ENCODE measurements at regions of chr4 and their contacts with region 1.

Region 1: GRCh38 chr4:10730590-10730989 is 46.0 kb upstream of the CLNK start:
- DNase-seq: no peak
- H3K4me3 Mint-ChIP-seq: peak overlapping the region; percentile 42
- H3K27ac Mint-ChIP-seq: peak overlapping the region; percentile 90
- H3K4me1 Mint-ChIP-seq: peaks cover 86% of the 10 kb centered on the region
- H3K27me3 Mint-ChIP-seq: no peaks in the 10 kb centered on the region

Region 2: DNA sequence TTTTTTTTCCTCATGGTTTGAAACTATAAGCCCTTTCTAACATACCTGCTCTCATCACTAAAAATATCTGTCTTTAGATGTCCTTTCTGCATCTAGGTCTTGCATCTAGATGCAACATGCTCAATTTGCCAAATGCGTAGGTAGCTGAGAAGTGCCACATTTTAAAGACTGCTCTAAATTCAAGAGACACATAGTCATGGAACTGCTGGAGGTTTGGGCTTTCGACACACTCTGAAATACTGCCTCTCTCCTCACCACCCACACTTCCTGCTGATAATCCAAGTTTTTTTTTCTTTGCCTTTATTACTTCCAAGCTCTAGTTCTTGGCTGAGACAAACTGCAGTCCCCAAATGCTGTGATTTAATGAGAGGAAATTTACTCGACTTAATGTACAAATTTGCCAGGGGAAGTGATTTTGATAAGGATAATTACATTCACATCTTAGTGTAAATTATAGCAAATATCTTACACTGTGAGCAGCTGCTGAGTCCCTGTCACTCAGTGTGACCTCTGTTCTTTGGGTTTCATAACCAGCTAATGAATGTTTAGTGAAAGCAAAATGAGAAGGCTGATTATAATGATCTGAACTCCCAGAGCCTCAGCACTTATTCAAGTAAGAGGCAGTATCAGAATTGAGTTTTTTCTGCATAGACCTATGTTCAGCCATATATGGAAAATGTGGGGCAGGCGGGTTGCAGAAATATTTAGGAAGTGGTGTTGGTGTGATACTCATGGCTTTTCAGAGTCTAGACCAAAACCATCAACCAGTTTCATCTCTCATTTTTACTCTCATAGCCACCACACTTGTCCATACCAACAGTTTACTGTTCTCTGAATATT is 917.9 kb before region 1 on chr4:
- intact Hi-C with region 1: loop called (anchors 10 kb)
- DNase-seq: peak; percentile 8
- H3K4me3 Mint-ChIP-seq: no peak overlapping the region
- H3K27ac Mint-ChIP-seq: no peak overlapping the region
- H3K4me1 Mint-ChIP-seq: peaks cover 13% of the 10 kb centered on the region
- H3K27me3 Mint-ChIP-seq: peaks cover 28% of the 10 kb centered on the region

Region 3: DNA sequence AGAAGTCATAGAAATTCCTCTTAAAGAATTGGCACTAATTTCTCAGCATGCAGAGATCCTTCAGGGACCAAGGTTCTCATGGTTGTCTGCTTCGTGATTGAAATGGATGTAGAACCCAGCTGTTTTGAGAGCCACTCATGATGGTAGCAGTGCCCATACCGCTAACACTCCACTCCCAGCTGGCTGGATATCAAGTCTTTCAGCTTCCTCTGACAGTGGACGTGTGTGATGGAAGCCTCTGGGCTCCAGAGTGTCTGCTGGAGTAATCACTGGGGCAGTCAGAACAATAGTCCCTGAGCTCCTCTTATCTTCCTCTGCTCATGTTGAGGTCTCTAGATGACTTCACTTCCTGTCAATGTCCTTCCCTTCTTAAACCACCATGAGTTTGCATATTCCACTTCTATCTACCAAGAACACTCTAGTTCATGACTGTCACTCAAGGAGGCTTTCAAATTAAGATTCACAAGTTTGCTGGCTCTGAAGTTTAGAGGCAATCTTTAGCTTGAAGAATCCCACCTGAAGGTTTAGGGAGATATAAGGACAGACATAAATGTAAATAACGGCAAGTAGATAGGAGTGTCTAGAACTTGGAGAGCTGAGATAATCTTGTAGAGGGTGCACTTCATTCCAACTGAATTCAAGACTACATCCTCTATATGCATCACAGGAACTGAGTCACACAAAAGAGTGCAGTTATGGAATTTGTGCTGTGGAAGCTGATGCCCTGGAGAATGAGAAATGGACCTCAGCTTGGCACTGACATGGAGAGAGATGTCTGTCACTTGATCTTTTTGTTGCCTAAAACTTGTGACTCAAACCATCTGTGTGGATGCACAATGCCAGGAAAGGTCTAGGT is 549.4 kb before region 1 on chr4:
- intact Hi-C with region 1: loop called (anchors 5 kb)
- DNase-seq: peak; percentile 21
- H3K4me3 Mint-ChIP-seq: peak overlapping the region; percentile 63
- H3K27ac Mint-ChIP-seq: peak overlapping the region; percentile 88
- H3K4me1 Mint-ChIP-seq: peaks cover 43% of the 10 kb centered on the region
- H3K27me3 Mint-ChIP-seq: peaks cover 7% of the 10 kb centered on the region

Region 4: GRCh38 chr4:10655986-10656385 is 74.6 kb before region 1 on chr4:
- intact Hi-C with region 1: loop called (anchors 1 kb)
- DNase-seq: no peak
- H3K4me3 Mint-ChIP-seq: peak overlapping the region; percentile 35
- H3K27ac Mint-ChIP-seq: peak overlapping the region; percentile 86
- H3K4me1 Mint-ChIP-seq: peaks cover 43% of the 10 kb centered on the region
- H3K27me3 Mint-ChIP-seq: no peaks in the 10 kb centered on the region

Region 5: GRCh38 chr4:10783351-10783750 is 52.8 kb after region 1 on chr4:
- intact Hi-C with region 1: loop called (anchors 2 kb)
- DNase-seq: no peak
- H3K4me3 Mint-ChIP-seq: no peak overlapping the region
- H3K27ac Mint-ChIP-seq: peak overlapping the region; percentile 71
- H3K4me1 Mint-ChIP-seq: peaks cover 21% of the 10 kb centered on the region
- H3K27me3 Mint-ChIP-seq: peaks cover 4% of the 10 kb centered on the region

Region 6: DNA sequence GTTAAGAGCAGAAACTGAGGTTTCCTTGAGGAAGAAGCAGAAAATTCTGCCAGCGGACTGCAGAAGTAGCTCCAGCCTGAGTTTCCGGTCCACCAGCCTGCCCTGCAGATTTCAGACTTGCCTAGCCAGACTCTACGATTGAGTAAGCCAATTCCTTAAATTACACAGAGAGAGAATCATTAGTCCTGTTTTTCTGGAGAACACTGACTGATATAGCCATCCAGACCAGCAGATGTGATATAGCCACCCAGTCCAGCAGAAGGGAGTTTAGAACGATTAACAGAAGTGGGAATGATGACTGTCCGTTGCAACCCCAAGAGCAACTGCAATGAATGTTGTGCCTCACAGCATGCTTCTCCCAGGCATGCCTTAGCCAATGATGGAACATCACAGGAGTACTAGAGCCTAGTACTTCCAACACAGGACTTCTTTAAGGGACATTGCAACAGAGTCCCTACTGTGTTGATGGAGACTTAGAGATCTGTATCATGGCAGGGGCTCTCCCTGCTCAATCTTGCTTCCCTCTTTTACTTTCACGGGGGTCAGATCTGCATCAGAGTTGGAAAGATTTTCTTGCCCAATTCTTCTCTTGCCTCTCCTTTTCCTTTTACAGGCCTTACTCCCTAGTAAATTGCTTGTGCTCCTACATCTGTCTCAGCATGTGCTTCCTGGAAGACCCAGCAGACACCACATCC is 218.6 kb after region 1 on chr4:
- intact Hi-C with region 1: loop called (anchors 1 kb)
- DNase-seq: no peak
- H3K4me3 Mint-ChIP-seq: no peak overlapping the region
- H3K27ac Mint-ChIP-seq: no peak overlapping the region
- H3K4me1 Mint-ChIP-seq: peaks cover 12% of the 10 kb centered on the region
- H3K27me3 Mint-ChIP-seq: peaks cover 8% of the 10 kb centered on the region

Region 7: GRCh38 chr4:11165052-11165451 is 434.5 kb after region 1 on chr4:
- intact Hi-C with region 1: no loop called
- DNase-seq: no peak
- H3K4me3 Mint-ChIP-seq: no peak overlapping the region
- H3K27ac Mint-ChIP-seq: no peak overlapping the region
- H3K4me1 Mint-ChIP-seq: no peaks in the 10 kb centered on the region
- H3K27me3 Mint-ChIP-seq: peaks cover 2% of the 10 kb centered on the region

Measured in activated T-helper 1 cell treated with anti-CD3 and anti-CD28 coated beads, Interleukin-12 subunit alpha, Interleukin-12 subunit beta, Interleukin-2, Interleukin-4 antibody, amounts not matched to agents 30 ng/mL and 10 ng/mL and 1 ng/mL, durations not matched to agents 14 hours and 24 hours and 36 hours (primary cell).